ENCODE measurements at regions of chr3 and their contacts with region 1.

Region 1: GRCh38 chr3:184371570-184372018 is 6.4 kb downstream of the THPO start:
- DNase-seq: peak; percentile 82 to 83
- ATAC-seq: peak; percentile 94 to 96
- H3K4me3 ChIP-seq: no peak overlapping the region
- H3K27ac ChIP-seq: no peak overlapping the region
- H3K4me1 ChIP-seq: peaks cover 8% of the 10 kb centered on the region; the same call in 2 of the 3 replicates
- CTCF ChIP-seq: peak; percentile 75
- EP300 ChIP-seq: no peak
- POLR2A ChIP-seq: no peak
- RAD21 ChIP-seq: peak; percentile 87 to 93

Region 2: GRCh38 chr3:184395320-184395660 is 23.7 kb after region 1 on chr3:
- CTCF ChIA-PET with region 1: interaction called, 38 read pairs
- POLR2A ChIA-PET with region 1: no interaction called
- DNase-seq: no peak
- ATAC-seq: no peak
- H3K4me3 ChIP-seq: no peak overlapping the region
- H3K27ac ChIP-seq: no peak overlapping the region
- H3K4me1 ChIP-seq: 0 out of 3 replicates have a peak, but pooled peaks cover 3% of the 10 kb centered on the region
- CTCF ChIP-seq: no peak
- EP300 ChIP-seq: no peak
- POLR2A ChIP-seq: no peak
- RAD21 ChIP-seq: no peak

Region 3: GRCh38 chr3:184469423-184469822 is 97.8 kb after region 1 on chr3:
- CTCF ChIA-PET with region 1: interaction called, 22 read pairs
- POLR2A ChIA-PET with region 1: interaction called, 5 read pairs
- DNase-seq: peak; percentile 37 to 41
- ATAC-seq: peak; percentile 77 to 89
- H3K4me3 ChIP-seq: no peak overlapping the region
- H3K27ac ChIP-seq: no peak overlapping the region
- H3K4me1 ChIP-seq: no peaks in the 10 kb centered on the region
- CTCF ChIP-seq: peak; percentile 48
- EP300 ChIP-seq: no peak
- POLR2A ChIP-seq: no peak
- RAD21 ChIP-seq: peak; percentile 47 to 55; a peak in 4 of 5 replicates

Region 4: GRCh38 chr3:184523825-184524615 is 152.4 kb after region 1 on chr3:
- CTCF ChIA-PET with region 1: interaction called, 10 read pairs
- POLR2A ChIA-PET with region 1: no interaction called
- DNase-seq: peak; percentile 28 to 31
- ATAC-seq: peak; percentile 66 to 84; a peak in 4 of 6 replicates
- H3K4me3 ChIP-seq: no peak overlapping the region
- H3K27ac ChIP-seq: no peak overlapping the region
- H3K4me1 ChIP-seq: no peaks in the 10 kb centered on the region
- CTCF ChIP-seq: no peak
- EP300 ChIP-seq: no peak
- POLR2A ChIP-seq: no peak
- RAD21 ChIP-seq: no peak

Region 5: GRCh38 chr3:184549793-184550577 is 178.4 kb after region 1 on chr3:
- CTCF ChIA-PET with region 1: interaction called, 171 read pairs
- POLR2A ChIA-PET with region 1: no interaction called
- DNase-seq: no peak
- ATAC-seq: no peak
- H3K4me3 ChIP-seq: no peak overlapping the region
- H3K27ac ChIP-seq: no peak overlapping the region
- H3K4me1 ChIP-seq: no peaks in the 10 kb centered on the region
- CTCF ChIP-seq: no peak
- EP300 ChIP-seq: no peak
- POLR2A ChIP-seq: no peak
- RAD21 ChIP-seq: no peak

Region 6: GRCh38 chr3:184583578-184584425 is 212.2 kb after region 1 on chr3:
- CTCF ChIA-PET with region 1: no interaction called
- POLR2A ChIA-PET with region 1: no interaction called
- DNase-seq: no peak
- ATAC-seq: peak in 1 of 2 experiments; percentile 39; a peak in 3 of 6 replicates
- H3K4me3 ChIP-seq: peak overlapping the region; percentile 35
- H3K27ac ChIP-seq: peak overlapping the region in 1 of 2 experiments; percentile 70; a peak in 2 of 6 replicates
- H3K4me1 ChIP-seq: no peaks in the 10 kb centered on the region
- CTCF ChIP-seq: no peak
- EP300 ChIP-seq: no peak
- POLR2A ChIP-seq: no peak
- RAD21 ChIP-seq: no peak

Measured in A549 (cell line).